Heart left ventricle (tissue), 16 donors: ENCODE measurements at regions of chr18 and their contacts with region 1.

Region 1: DNA sequence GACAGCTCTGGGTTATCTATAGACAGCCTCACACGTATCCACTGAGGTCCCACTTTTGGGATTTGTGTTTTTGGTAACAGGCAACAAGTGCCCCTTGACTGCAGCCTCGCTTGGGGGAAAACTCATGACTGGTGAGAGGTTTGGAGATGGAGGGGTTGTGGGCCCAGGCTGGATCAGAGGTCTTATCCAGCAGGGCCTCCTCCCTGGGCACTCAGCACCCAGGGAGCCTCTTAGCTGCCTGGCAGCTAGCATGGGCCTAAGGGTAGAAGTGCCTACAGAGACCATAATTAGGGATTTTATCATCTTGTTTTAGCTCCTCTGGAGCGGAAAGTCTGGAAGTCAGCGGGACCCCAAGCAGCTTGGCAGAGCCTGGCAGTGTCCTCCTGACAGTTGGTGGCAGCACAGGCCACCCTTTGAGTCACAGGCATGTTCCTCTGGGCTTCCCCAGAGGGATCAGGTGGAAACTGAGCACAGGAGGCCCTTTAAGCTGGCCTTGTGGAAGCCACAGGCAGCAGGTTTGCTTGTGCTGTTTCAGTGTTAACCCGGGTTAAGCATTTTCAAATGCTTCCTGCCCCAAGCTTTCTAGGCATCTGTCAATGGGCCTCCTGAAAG is 143.1 kb downstream of the KCTD1 start:
- DNase-seq: peak in 4 of 5 donors; percentile 15 to 59 (median 42)
- ATAC-seq: peak; percentile 74 to 91 (median 82)
- H3K4me3 ChIP-seq: no peak overlapping the region
- H3K27ac ChIP-seq: no peak overlapping the region
- H3K4me1 ChIP-seq: no peaks in the 10 kb centered on the region
- H3K27me3 ChIP-seq: no peaks in the 10 kb centered on the region
- CTCF ChIP-seq: peak; percentile 14 to 59 (median 53)
- POLR2A ChIP-seq: no peak

Region 2: GRCh38 chr18:26119246-26119645 is 286.1 kb before region 1 on chr18:
- intact Hi-C with region 1: no loop called
- DNase-seq: no peak
- ATAC-seq: no peak
- H3K4me3 ChIP-seq: no peak overlapping the region
- H3K27ac ChIP-seq: no peak overlapping the region
- H3K4me1 ChIP-seq: no peaks in the 10 kb centered on the region
- H3K27me3 ChIP-seq: peaks cover 0 to 16% (median 0%) of the 10 kb centered on the region in 9 donors
- CTCF ChIP-seq: no peak
- POLR2A ChIP-seq: no peak

Region 3: GRCh38 chr18:26548429-26549262 is 143.3 kb after region 1 on chr18 and contains the start of gene KCTD1:
- intact Hi-C with region 1: loop called in 2 of 10 experiments (anchors 10 kb)
- DNase-seq: peak; percentile 77 to 91 (median 83)
- ATAC-seq: peak; percentile 61 to 83 (median 78)
- H3K4me3 ChIP-seq: peak within 1 kb of the TSS; percentile 67 to 93 (median 77)
- H3K27ac ChIP-seq: peak within 1 kb of the TSS; percentile 48 to 83 (median 74)
- H3K4me1 ChIP-seq: peaks cover 0 to 56% (median 34%) of the 10 kb centered on the region in 12 donors
- H3K27me3 ChIP-seq: peaks cover 0 to 43% (median 14%) of the 10 kb centered on the region in 9 donors
- CTCF ChIP-seq: no peak
- POLR2A ChIP-seq: no peak
- total RNA-seq, gene KCTD1: 8.4 to 21.8 (median 10.0) TPM

Region 4: GRCh38 chr18:26621161-26622026 is 216.1 kb after region 1 on chr18:
- intact Hi-C with region 1: loop called in 1 of 10 experiments (anchors 10 kb)
- DNase-seq: peak in 3 of 5 donors; percentile 25 to 54 (median 33)
- ATAC-seq: peak in 3 of 4 donors; percentile 71 to 76 (median 75)
- H3K4me3 ChIP-seq: no peak overlapping the region
- H3K27ac ChIP-seq: no peak overlapping the region
- H3K4me1 ChIP-seq: peaks cover 0 to 2% (median 0%) of the 10 kb centered on the region in 12 donors
- H3K27me3 ChIP-seq: no peaks in the 10 kb centered on the region
- CTCF ChIP-seq: peak; percentile 49 to 70 (median 62)
- POLR2A ChIP-seq: no peak

Region 5: DNA sequence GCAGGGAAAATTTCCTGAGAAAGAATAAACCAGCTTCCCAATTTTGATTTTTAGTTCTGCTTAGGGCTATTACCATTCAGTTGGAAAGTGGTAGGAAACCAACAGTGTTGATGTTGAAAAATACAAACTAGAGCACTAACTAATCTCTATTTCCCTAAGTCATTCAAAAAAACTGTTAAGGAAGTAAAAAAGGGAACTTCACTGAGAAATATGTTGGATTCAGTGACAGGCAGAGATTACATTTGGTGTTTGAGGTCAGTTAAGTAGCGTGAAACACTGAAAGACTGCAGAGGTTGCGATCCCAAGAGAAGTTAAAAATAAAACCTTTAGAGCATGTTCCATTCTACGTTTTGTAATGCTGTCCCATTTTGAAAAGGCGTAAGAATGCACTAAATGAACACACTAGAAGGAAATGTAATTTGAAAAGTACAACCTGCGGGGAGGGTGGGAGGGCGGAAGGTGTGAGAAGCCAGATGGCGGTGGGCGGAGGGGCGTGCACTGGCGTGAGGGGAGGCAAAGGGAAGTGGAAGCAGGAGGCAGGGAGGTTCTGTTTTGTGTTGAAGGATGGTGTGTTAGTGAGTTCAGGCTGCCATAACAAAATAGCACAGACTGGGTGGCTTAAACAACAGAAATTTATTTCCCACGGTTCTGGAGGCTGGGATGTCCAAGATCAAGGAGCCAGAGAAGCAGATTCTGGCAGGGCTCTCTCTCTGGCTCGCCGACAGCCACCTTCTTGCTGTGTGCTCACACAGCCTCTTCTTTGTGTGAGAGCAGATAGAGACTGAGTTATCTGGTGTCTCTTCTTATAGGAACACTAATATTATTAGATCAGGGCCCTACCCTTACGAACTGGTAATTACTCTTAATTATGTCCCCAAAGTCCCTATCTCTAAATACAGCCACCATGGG is 237.4 kb after region 1 on chr18:
- intact Hi-C with region 1: loop called in 4 of 10 experiments (anchors 5 to 10 kb)
- DNase-seq: no peak
- ATAC-seq: no peak
- H3K4me3 ChIP-seq: no peak overlapping the region
- H3K27ac ChIP-seq: no peak overlapping the region
- H3K4me1 ChIP-seq: peaks cover 0 to 18% (median 0%) of the 10 kb centered on the region in 12 donors
- H3K27me3 ChIP-seq: no peaks in the 10 kb centered on the region
- CTCF ChIP-seq: no peak
- POLR2A ChIP-seq: no peak

Region 6: GRCh38 chr18:26648509-26649192 is 243.4 kb after region 1 on chr18:
- intact Hi-C with region 1: loop called in 7 of 10 experiments (anchors 2 to 10 kb)
- DNase-seq: no peak
- ATAC-seq: no peak
- H3K4me3 ChIP-seq: no peak overlapping the region
- H3K27ac ChIP-seq: no peak overlapping the region
- H3K4me1 ChIP-seq: peaks cover 0 to 7% (median 0%) of the 10 kb centered on the region in 12 donors
- H3K27me3 ChIP-seq: peaks cover 0 to 14% (median 0%) of the 10 kb centered on the region in 9 donors
- CTCF ChIP-seq: no peak
- POLR2A ChIP-seq: no peak

Region 7: GRCh38 chr18:26771524-26771923 is 366.2 kb after region 1 on chr18:
- intact Hi-C with region 1: loop called in 4 of 10 experiments (anchors 2 to 10 kb)
- DNase-seq: no peak
- ATAC-seq: peak in 2 of 4 donors; percentile 61 to 69
- H3K4me3 ChIP-seq: no peak overlapping the region
- H3K27ac ChIP-seq: no peak overlapping the region
- H3K4me1 ChIP-seq: no peaks in the 10 kb centered on the region
- H3K27me3 ChIP-seq: peaks cover 0 to 15% (median under 1%) of the 10 kb centered on the region in 9 donors
- CTCF ChIP-seq: peak; percentile 18 to 45 (median 36)
- POLR2A ChIP-seq: no peak

Region 8: GRCh38 chr18:26963292-26963691 is 558.0 kb after region 1 on chr18:
- intact Hi-C with region 1: loop called in 1 of 10 experiments (anchors 10 kb)
- DNase-seq: no peak
- ATAC-seq: peak in 3 of 4 donors; percentile 52 to 56 (median 54)
- H3K4me3 ChIP-seq: no peak overlapping the region
- H3K27ac ChIP-seq: no peak overlapping the region
- H3K4me1 ChIP-seq: peaks cover 0 to 9% (median 0%) of the 10 kb centered on the region in 12 donors
- H3K27me3 ChIP-seq: no peaks in the 10 kb centered on the region
- CTCF ChIP-seq: peak; percentile 9 to 51 (median 35)
- POLR2A ChIP-seq: no peak